ENCODE measurements at regions of chr13 and their contacts with region 1.

Region 1: DNA sequence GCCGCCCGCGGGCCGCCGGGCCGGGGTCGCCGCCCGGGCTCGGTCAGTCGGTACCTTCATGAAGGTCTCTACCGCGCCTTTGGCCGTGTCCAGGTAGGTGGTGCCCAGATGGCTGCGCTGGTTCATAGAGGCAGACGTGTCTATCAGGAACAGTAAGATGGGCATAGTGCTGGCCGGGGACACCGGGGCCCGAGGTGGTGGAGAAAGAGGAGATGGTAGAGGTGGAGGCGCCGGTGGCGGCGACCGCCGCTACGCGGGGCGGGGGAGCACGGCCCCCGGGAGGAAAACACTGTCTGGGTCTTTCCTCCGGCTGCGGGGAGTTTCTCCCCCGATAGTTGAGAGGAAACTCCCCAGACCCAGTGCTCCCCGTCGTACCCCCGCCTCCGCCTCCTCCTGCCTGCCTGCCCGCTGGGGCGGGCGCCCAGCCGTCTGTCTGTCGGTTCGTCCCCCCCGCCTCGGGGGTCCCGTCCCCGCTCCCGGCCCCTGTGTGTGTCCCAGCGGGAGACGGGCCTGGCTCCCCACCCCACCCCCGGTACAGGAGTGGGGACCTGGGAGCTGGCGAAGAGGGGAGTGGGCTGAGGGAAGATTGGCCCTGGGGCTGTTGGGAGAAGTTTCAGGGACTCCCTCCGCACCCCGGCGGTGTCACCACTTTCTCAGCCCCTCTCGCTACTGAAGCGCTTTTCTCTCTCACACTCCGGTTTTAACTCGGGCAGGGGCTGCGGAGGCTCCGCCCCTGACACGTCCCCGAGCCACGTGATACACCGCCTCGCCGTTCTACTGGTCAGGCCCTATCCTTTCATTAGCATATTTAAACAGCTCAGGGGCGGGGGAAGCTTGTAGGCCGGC is at the start of gene INTS6:
- DNase-seq: peak; percentile 98
- ATAC-seq: peak; percentile 75
- H3K4me3 ChIP-seq: peak within 1 kb of the TSS; percentile 93 to 99 (median 98)
- H3K27ac ChIP-seq: peak within 1 kb of the TSS; percentile 95
- H3K4me1 ChIP-seq: peaks cover 41% of the 10 kb centered on the region
- H3K27me3 ChIP-seq: no peaks in the 10 kb centered on the region; a peak in 1 of 5 replicates
- CTCF ChIP-seq: no peak
- EP300 ChIP-seq: no peak
- POLR2A ChIP-seq: peak; percentile 99 to 100
- RAD21 ChIP-seq: peak; percentile 57
- total RNA-seq, gene INTS6: 38.4 and 40.3 TPM in 2 replicates

Region 2: DNA sequence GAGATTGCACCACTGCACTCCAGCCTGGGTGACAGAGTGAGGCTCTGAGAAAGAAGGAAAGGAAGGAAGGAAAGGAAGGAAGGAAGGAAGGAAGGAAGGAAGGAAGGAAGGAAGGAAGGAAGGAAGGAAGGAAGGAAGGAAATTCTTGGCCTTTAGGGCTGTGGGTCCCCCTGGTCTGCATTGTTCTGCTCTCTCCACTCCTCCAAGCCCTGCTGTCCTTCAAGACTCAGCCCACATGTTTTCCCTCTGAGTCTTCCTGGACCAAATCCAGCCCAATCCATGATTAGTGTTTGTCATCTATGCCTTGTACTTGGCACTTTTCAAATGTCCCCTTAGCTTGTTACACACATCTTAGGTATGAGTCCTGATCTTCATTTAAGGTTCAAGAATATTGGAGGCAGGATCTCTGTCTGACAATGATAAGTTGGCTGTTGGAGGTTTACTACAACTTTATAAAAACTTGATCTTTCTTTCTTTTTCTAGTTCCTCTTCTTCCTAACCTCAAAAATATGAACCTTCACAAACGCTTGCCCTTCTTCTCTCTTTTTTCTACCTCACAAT is 49.1 kb after region 1 on chr13:
- CTCF ChIA-PET with region 1: no interaction called
- POLR2A ChIA-PET with region 1: interaction called, 10 read pairs
- in situ Hi-C with region 1: no loop called
- intact Hi-C with region 1: no loop called
- DNase-seq: no peak
- ATAC-seq: no peak
- H3K4me3 ChIP-seq: no peak overlapping the region
- H3K27ac ChIP-seq: no peak overlapping the region
- H3K4me1 ChIP-seq: peaks cover 33% of the 10 kb centered on the region
- H3K27me3 ChIP-seq: no peaks in the 10 kb centered on the region; a peak in 2 of 5 replicates
- CTCF ChIP-seq: no peak
- EP300 ChIP-seq: no peak
- POLR2A ChIP-seq: no peak
- RAD21 ChIP-seq: no peak

Region 3: GRCh38 chr13:51549050-51549449 is 96.5 kb after region 1 on chr13:
- CTCF ChIA-PET with region 1: no interaction called
- POLR2A ChIA-PET with region 1: interaction called, 19 read pairs
- in situ Hi-C with region 1: no loop called
- intact Hi-C with region 1: no loop called
- DNase-seq: peak; percentile 33
- ATAC-seq: peak; percentile 68
- H3K4me3 ChIP-seq: no peak overlapping the region
- H3K27ac ChIP-seq: no peak overlapping the region
- H3K4me1 ChIP-seq: peaks cover 34% of the 10 kb centered on the region
- H3K27me3 ChIP-seq: no peaks in the 10 kb centered on the region
- CTCF ChIP-seq: no peak
- EP300 ChIP-seq: no peak
- POLR2A ChIP-seq: no peak
- RAD21 ChIP-seq: no peak

Region 4: DNA sequence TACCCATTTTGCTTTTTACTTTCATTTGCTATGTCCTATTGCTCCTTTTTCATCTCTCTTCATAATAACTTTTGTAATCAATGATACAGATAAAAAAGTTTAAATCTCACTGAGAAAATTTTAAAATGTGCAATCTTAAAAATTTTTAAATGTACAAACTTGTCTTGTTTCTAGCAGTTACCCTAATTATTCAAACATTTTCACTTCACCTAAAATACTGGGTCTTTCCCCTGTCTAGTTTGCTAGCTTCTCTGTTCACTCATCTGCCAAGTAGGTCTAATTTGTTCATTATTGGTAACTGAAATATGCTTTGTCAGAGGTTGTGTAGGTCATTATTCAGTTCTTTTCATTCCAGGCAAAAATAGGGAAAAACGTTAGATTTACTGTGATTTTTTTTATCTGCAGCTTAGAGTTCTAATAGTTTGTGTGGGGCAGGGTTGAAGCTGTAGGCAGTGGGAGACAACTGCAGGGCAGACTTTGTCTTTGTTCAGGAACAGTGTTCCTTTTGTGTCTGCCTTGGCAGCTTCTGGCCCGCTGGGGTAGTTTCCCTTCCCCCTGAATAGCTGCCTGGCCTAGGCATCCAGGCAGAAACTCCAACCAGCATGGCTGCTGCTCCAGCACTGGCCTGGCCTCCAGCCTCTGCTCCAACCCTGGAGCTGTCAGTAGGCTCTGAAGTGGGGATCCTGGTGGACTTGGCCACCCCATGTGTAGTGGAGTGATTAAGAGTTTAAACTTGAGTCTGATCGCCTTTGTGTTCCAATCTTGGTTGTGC is 180.2 kb after region 1 on chr13:
- CTCF ChIA-PET with region 1: no interaction called
- POLR2A ChIA-PET with region 1: interaction called, 15 read pairs
- in situ Hi-C with region 1: no loop called
- intact Hi-C with region 1: loop called (anchors 1 kb)
- DNase-seq: peak; percentile 77
- ATAC-seq: peak; percentile 72
- H3K4me3 ChIP-seq: peak overlapping the region in 1 of 3 experiments; percentile 34; a peak in 2 of 6 replicates
- H3K27ac ChIP-seq: peak overlapping the region; percentile 62
- H3K4me1 ChIP-seq: peaks cover 72% of the 10 kb centered on the region
- H3K27me3 ChIP-seq: no peaks in the 10 kb centered on the region
- CTCF ChIP-seq: no peak
- EP300 ChIP-seq: no peak
- POLR2A ChIP-seq: no peak
- RAD21 ChIP-seq: 0 out of 2 replicates have a peak, but pooled peaks have one; percentile 39

Region 5: DNA sequence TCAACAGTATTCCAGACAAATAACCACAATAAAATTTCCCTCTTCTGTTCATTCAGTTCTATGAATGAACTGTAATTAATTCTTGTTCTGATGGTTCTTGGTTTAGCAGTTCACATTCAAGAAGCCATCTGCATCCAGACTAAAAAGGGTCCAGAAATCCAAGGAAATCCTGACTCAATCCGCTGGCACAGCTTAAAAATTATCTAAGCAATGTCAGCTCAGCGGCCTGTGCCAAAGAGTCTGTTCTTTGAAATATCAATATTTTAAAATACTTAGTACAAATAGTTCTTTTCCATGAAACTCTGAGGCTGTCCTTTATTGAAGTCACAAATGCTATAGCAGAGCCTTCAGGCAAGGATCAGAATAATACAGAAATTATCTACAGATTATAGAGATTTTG is 294.2 kb after region 1 on chr13:
- CTCF ChIA-PET with region 1: no interaction called
- POLR2A ChIA-PET with region 1: interaction called, 10 read pairs
- in situ Hi-C with region 1: no loop called
- intact Hi-C with region 1: no loop called
- DNase-seq: no peak
- ATAC-seq: no peak
- H3K4me3 ChIP-seq: no peak overlapping the region
- H3K27ac ChIP-seq: peak overlapping the region; percentile 77
- H3K4me1 ChIP-seq: peaks cover 40% of the 10 kb centered on the region
- H3K27me3 ChIP-seq: no peaks in the 10 kb centered on the region
- CTCF ChIP-seq: no peak
- EP300 ChIP-seq: no peak
- POLR2A ChIP-seq: no peak
- RAD21 ChIP-seq: no peak

Region 6: DNA sequence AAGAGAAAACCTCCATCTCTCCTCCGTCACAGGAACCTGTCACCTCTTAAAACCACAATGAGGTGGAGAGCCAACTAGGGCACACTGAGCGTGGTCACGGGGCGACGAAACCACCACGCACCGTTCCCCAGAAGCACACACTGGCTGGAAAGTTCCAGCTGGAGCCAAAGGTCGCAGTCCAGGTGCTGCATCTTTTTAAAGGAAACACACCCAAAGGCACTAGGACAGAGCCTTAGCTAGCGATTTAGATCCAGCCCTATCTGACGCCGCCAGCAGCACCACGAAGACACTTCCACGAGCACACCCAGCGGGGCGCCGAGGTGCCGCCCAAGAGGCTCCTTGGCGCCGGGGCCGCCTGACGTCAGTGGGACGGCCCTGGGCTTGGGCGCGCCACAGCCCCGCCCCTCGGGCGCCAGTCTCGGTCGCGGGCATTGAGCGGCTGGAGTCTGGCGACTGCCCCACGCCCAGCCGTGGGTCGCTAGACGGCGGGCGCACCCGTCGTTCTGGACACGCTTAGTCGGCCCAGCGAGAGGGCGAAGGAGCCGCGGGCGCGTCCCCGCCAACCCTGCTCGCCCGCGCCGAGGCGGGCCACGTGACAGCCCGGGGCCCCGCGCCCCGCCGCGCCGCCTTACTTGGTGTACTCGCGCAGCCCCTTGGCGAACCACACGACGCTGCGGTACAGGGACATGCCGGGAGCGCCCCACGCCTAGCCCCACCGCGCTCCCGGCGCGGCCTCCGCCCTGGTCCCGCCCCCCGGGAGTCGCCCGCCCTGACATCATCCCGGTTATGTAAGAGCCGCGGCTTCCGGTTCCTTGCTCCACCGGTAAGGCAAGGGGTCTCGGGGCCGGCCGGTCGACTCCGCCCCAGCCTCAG is 351.1 kb after region 1 on chr13 and contains the start of gene DHRS12:
- CTCF ChIA-PET with region 1: no interaction called
- POLR2A ChIA-PET with region 1: interaction called, 19 read pairs
- in situ Hi-C with region 1: loop called (anchors 10 kb)
- intact Hi-C with region 1: loop called (anchors 2 kb)
- DNase-seq: peak; percentile 60
- ATAC-seq: peak; percentile 89
- H3K4me3 ChIP-seq: peak within 1 kb of the TSS; percentile 68 to 85 (median 75)
- H3K27ac ChIP-seq: peak within 1 kb of the TSS; percentile 77
- H3K4me1 ChIP-seq: peaks cover 49% of the 10 kb centered on the region
- H3K27me3 ChIP-seq: no peaks in the 10 kb centered on the region
- CTCF ChIP-seq: peak; percentile 14; the same call in 1 of the 2 replicates
- EP300 ChIP-seq: peak in 1 of 2 experiments; percentile 20; a peak in 1 of 4 replicates
- POLR2A ChIP-seq: peak; percentile 73 to 81
- RAD21 ChIP-seq: peak; percentile 9
- total RNA-seq, gene DHRS12: 4.8 and 7.2 TPM in 2 replicates

Measured in HepG2 (cell line).